Activated B cell treated with CpG ODN at 0.5 μM for 24 hours (primary cell): ENCODE measurements at regions of chr9 and their contacts with region 1.

Region 1: DNA sequence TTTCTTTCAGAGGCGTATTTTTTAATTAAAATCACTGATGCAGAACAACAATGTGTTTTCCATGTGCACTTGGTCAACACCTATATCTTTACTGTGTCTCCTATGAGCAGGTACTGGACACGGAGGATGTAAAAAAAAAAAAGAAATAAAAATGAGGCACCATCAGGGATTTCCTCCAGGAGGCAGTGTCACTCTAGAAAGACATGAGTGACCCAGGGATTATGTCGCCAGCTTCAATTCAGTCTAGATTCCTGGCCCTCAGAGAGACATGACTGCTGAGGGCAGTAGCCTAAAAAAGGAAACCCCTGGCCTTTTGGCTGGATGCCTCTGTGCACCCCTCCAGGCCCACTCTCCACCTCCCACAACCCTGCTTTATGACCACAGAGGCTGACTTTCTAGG is 18.3 kb upstream of the IL33 start:
- DNase-seq: no peak
- ATAC-seq: no peak
- H3K4me3 Mint-ChIP-seq: no peak overlapping the region
- H3K27ac Mint-ChIP-seq: no peak overlapping the region
- H3K4me1 Mint-ChIP-seq: no peaks in the 10 kb centered on the region
- H3K27me3 Mint-ChIP-seq: peaks cover 25% of the 10 kb centered on the region
- CTCF ChIP-seq: no peak

Region 2: GRCh38 chr9:6566409-6567139 is 369.2 kb after region 1 on chr9:
- CTCF ChIA-PET with region 1: no interaction called
- POLR2A ChIA-PET with region 1: no interaction called
- intact Hi-C with region 1: loop called (anchors 5 kb)
- DNase-seq: no peak
- ATAC-seq: no peak
- H3K4me3 Mint-ChIP-seq: no peak overlapping the region
- H3K27ac Mint-ChIP-seq: no peak overlapping the region
- H3K4me1 Mint-ChIP-seq: no peaks in the 10 kb centered on the region
- H3K27me3 Mint-ChIP-seq: no peaks in the 10 kb centered on the region
- CTCF ChIP-seq: no peak